Panc1 (cell line): ENCODE measurements at regions of chr11 and their contacts with region 1.

Region 1: DNA sequence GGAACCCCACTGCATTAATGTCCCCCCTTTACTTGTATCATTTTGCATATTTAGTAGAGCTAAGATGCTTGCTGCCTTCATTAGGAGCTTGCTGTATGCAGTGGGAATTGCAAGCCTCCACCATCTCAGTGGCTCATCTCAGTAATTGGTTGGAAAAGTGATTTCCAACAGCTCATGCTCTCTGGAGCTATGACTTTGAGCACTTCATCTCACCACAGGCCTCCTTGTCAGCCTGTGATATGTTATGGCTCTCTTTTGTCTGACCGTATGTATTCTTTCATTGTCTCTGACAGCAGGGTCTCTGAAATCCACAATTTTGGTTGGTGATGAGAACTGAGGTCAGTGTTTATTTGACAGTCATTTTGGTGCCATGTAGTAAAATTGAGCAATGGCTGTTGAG is 345.1 kb downstream of the FAT3 start:
- DNase-seq: no peak
- ATAC-seq: no peak
- H3K4me3 ChIP-seq: no peak overlapping the region
- H3K27ac ChIP-seq: no peak overlapping the region
- H3K4me1 ChIP-seq: no peaks in the 10 kb centered on the region
- H3K27me3 ChIP-seq: no peaks in the 10 kb centered on the region
- CTCF ChIP-seq: no peak

Region 2: DNA sequence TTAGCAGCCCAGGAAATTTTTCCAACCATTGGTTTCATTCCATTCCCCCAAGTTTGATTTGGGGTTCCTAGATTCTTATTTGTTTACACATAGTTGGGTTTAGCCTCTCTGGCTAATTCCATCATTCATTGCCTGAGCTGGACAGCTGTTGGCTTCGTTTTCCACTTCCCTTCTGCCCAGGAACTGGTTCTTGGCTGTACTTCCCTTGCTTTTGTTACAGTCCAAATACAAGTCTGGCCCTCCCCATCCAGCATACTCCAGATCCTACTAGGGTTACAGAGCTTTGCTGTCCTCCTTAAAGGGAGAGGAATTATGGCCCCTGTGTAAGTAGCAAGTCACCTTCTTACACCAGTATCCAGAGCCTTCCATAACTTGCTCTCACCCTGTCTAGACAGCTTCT is 11.2 kb after region 1 on chr11:
- CTCF ChIA-PET with region 1: no interaction called
- POLR2A ChIA-PET with region 1: no interaction called
- in situ Hi-C with region 1: no loop called
- intact Hi-C with region 1: no loop called
- DNase-seq: no peak
- ATAC-seq: no peak
- H3K4me3 ChIP-seq: no peak overlapping the region
- H3K27ac ChIP-seq: no peak overlapping the region
- H3K4me1 ChIP-seq: no peaks in the 10 kb centered on the region
- H3K27me3 ChIP-seq: no peaks in the 10 kb centered on the region
- CTCF ChIP-seq: no peak

Region 3: DNA sequence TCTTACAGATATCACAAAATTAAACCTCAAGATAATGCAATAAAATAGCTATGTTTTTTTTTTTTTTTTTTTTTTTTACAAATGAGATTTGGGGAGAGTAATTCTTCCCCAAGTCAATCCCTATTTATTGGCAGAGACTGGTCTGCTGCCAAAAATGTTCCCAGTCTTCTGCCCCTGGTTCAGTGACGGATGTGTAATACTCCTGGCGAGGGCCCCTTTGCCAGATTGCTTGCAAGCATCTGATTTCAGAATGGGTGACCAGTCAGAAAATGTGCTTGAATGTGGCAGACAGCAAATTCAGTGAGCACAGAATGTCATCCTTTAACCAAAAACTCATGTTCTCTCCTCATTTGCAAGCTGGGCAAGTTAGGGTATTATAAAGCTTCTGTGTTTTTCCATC is 36.0 kb after region 1 on chr11:
- CTCF ChIA-PET with region 1: no interaction called
- POLR2A ChIA-PET with region 1: interaction called, 11 read pairs
- in situ Hi-C with region 1: no loop called
- intact Hi-C with region 1: no loop called
- DNase-seq: no peak
- ATAC-seq: no peak
- H3K4me3 ChIP-seq: no peak overlapping the region
- H3K27ac ChIP-seq: no peak overlapping the region
- H3K4me1 ChIP-seq: no peaks in the 10 kb centered on the region
- H3K27me3 ChIP-seq: 0 out of 2 replicates have a peak, but pooled peaks cover 3% of the 10 kb centered on the region
- CTCF ChIP-seq: no peak